ENCODE measurements at regions of chr11 and their contacts with region 1.

Region 1: GRCh38 chr11:109946322-109946846 is 146.8 kb upstream of the ZC3H12C start:
- DNase-seq: peak; percentile 85 to 97
- H3K4me3 ChIP-seq: peak overlapping the region; percentile 61
- H3K27ac ChIP-seq: peak overlapping the region; percentile 94
- H3K4me1 ChIP-seq: peaks cover 11% of the 10 kb centered on the region
- H3K27me3 ChIP-seq: no peaks in the 10 kb centered on the region
- CTCF ChIP-seq: peak; percentile 98

Region 2: DNA sequence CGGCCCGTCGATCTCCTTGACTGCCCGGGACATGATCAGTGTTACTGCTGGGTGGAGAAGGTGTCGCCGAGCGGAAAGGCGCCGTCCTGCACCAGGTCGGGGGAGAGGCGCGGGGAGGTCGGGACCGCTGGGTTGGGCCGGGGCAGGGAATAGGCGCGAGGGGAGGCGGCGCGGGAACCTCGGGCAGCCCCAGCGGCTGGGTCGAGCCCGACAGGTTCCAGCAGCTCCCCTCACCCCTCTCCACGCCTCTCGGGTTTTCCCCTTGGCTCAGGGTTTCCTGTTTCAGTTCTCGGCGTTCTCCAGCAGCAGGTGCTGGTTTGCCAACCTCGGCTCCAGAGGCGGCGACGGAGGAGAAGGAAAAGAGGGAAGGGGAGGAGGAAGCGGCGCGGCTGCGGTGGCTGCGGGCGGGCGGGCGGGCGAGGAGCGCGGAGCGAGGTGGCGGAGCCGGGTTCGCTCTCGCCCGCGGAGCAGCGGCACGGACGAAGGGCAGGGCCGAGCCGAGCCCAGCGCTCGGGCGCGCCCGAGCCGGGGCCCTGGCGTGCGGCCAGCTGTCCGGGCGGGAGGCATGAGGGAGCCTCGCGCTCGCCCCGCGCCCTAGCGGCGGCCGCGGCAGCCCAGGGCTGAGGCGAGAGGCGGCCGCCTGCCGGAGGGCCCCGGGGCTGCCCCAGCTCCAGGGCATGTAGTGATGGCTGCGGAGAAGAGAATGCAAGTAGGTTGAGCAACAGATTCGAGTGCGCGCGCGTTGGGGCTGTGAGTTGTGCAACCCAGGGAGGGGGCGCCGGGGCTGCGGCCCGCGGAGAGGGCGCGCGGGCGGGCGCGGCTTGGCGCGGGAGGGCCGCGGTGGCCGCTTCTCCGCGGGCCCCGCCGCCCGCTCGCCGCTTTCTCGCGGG is 146.4 kb after region 1 on chr11 and contains the start of gene ZC3H12C:
- CTCF ChIA-PET with region 1: interaction called, 5 read pairs
- POLR2A ChIA-PET with region 1: no interaction called
- intact Hi-C with region 1: loop called (anchors 1 kb)
- DNase-seq: peak; percentile 89
- H3K4me3 ChIP-seq: peak within 1 kb of the TSS; percentile 82
- H3K27ac ChIP-seq: peak within 1 kb of the TSS; percentile 77
- H3K4me1 ChIP-seq: peaks cover 53% of the 10 kb centered on the region
- H3K27me3 ChIP-seq: no peaks in the 10 kb centered on the region
- CTCF ChIP-seq: peak; percentile 24; the same call in 1 of the 2 replicates
- total RNA-seq, gene ZC3H12C: 9.3 and 12.4 TPM in 2 replicates

Region 3: DNA sequence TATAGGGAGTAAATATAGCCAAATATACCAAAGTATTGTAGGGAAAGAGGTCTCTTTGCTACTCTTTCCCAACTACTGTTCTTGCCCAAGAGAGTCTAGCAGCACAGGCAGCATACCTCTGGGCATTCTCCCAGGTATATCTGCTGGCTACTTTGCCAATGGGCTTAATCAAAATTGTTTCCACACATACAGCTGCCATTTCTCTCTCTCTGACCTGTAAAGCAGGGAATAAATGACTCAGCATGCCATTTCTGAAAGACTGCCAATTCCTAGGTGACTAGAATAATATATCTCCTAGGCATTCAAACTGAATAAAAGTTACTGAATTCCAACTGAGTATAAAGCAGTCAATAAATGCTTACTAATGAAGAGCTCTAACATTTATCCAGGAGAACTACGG is 305.5 kb after region 1 on chr11:
- CTCF ChIA-PET with region 1: no interaction called
- POLR2A ChIA-PET with region 1: no interaction called
- intact Hi-C with region 1: loop called (anchors 10 kb)
- DNase-seq: peak; percentile 58 to 95
- H3K4me3 ChIP-seq: no peak overlapping the region
- H3K27ac ChIP-seq: peak overlapping the region; percentile 66
- H3K4me1 ChIP-seq: peaks cover 24% of the 10 kb centered on the region
- H3K27me3 ChIP-seq: no peaks in the 10 kb centered on the region
- CTCF ChIP-seq: no peak

Region 4: GRCh38 chr11:110362971-110363509 is 416.7 kb after region 1 on chr11:
- CTCF ChIA-PET with region 1: no interaction called
- POLR2A ChIA-PET with region 1: no interaction called
- intact Hi-C with region 1: loop called (anchors 1 kb)
- DNase-seq: peak; percentile 47 to 73
- H3K4me3 ChIP-seq: peak overlapping the region; percentile 30; the same call in 1 of the 2 replicates
- H3K27ac ChIP-seq: peak overlapping the region; percentile 72
- H3K4me1 ChIP-seq: peaks cover 46% of the 10 kb centered on the region
- H3K27me3 ChIP-seq: no peaks in the 10 kb centered on the region
- CTCF ChIP-seq: no peak

Region 5: GRCh38 chr11:110376711-110377324 is 430.4 kb after region 1 on chr11:
- CTCF ChIA-PET with region 1: no interaction called
- POLR2A ChIA-PET with region 1: no interaction called
- intact Hi-C with region 1: loop called (anchors 1 kb)
- DNase-seq: peak; percentile 68 to 72
- H3K4me3 ChIP-seq: no peak overlapping the region
- H3K27ac ChIP-seq: no peak overlapping the region
- H3K4me1 ChIP-seq: peaks cover 25% of the 10 kb centered on the region
- H3K27me3 ChIP-seq: no peaks in the 10 kb centered on the region
- CTCF ChIP-seq: peak; percentile 94

Measured in PC-9 (cell line).